ENCODE measurements at regions of chr5 and their contacts with region 1.

Region 1: DNA sequence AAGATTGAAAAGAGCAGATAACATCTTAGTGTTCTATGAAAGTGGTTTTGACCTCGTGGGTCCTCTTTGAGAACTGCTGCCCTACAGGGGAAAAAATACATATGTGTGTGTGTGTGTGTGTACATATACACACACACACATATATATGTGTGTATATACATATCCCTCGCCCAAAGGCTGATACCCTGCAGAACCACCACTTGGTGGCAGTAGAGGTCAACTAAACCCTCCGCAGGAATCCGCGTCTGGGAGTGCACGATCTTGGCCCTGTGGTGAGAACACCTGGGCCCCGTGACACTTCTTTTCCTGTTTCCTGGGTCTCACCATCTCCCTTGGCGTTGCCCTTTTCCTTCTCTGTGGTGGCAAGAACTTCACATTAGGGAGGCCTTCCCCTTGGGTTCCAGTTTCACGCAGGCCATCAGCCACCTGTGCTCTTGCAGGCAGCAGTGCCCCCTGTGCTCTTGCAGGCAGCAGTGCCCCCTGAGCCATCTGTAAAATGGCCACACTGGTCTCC is 8.2 kb downstream of the IL9 start:
- DNase-seq: no peak
- ATAC-seq: peak; percentile 73

Region 2: GRCh38 chr5:135615581-135616260 is 271.7 kb before region 1 on chr5:
- intact Hi-C with region 1: no loop called
- DNase-seq: no peak
- ATAC-seq: no peak

Region 3: DNA sequence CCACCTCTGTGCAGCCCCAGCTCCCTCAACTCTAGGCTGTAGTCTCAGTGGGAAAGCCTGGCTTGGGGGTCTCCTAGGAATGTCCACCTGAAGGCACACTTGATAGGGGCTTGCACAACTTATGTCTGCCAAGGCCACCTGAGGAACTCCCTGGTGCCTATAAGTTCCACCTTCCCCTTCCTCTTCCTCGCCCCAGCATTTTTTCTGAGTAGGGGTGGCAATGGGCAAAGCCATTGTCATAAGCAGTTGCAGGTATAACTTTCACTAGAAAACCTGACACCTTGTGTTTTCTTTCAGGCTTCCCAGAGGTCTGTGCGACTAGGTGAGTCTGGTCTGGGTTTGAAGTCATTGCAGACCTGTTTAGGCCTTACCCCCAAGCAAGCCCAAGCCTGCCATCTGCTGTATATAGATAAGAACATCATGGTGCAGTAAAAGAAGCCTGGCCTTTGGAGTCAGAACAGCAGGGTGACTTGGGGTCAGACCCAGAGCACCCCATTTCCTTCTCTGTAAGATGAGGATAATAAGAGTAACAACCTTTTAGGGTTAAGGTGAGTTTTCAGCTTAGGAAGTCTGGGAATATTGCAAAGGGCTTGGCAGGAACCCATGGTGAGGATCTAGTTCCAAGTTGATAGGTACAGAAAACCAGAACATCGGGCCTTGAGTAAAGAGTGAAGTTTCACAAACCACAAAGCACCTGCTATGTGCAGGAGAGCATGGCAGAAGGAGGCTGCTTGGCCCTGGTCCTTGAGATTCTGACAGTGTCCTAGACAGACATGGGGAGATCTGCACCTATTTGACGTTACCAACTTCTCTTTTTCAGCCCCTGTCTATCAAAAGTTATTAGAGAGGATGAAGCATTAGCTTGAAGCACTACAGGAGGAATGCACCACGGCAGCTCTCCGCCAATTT is 175.2 kb after region 1 on chr5:
- intact Hi-C with region 1: loop called (anchors 1 kb)
- DNase-seq: no peak
- ATAC-seq: no peak

Region 4: GRCh38 chr5:136080483-136081216 is 193.2 kb after region 1 on chr5:
- intact Hi-C with region 1: loop called (anchors 5 kb)
- DNase-seq: peak; percentile 95
- ATAC-seq: peak; percentile 96

Region 5: GRCh38 chr5:136212252-136212721 is 324.9 kb after region 1 on chr5:
- intact Hi-C with region 1: loop called (anchors 1 kb)
- DNase-seq: no peak
- ATAC-seq: no peak

Region 6: GRCh38 chr5:136769900-136770684 is 882.7 kb after region 1 on chr5:
- intact Hi-C with region 1: loop called (anchors 5 kb)
- DNase-seq: no peak
- ATAC-seq: peak; percentile 77